ENCODE measurements at regions of chr2 and their contacts with region 1.

Region 1: GRCh38 chr2:33577668-33578067 is 21.4 kb downstream of the FAM98A start:
- DNase-seq: no peak
- H3K4me3 ChIP-seq: peak overlapping the region in 20 of 59 donors; percentile 1 to 49 (median 26)
- H3K27ac ChIP-seq: peak overlapping the region; percentile 13 to 98 (median 91)
- H3K27me3 ChIP-seq: no peaks in the 10 kb centered on the region
- CTCF ChIP-seq: no peak

Region 2: DNA sequence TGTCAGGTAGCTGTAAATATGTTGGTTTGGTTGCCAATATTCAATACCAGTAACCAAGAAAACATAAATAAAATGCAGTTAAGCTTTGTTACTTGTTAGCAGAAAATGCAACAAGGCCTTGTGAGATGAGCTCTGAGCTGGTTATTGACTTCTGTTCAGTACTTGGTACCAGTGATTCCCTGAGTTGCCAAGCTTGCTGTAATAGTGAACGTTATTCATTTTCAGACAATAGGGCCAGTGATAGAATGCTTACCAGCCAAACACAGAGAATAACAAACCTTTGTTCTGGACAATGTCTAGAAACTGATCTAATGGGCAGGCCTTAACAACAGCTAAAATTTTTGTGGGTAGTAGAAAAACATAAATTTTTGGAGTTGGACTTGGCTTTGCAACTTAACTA is 71.7 kb before region 1 on chr2:
- intact Hi-C with region 1: loop called in 1 of 2 experiments (anchors 1 kb)
- DNase-seq: no peak
- H3K4me3 ChIP-seq: peak overlapping the region in 2 of 59 donors; percentile 25 to 40
- H3K27ac ChIP-seq: peak overlapping the region; percentile 70 to 100 (median 97)
- H3K27me3 ChIP-seq: no peaks in the 10 kb centered on the region
- CTCF ChIP-seq: peak in 2 of 56 donors; percentile 19 to 20

Measured in dorsolateral prefrontal cortex (tissue), 120 donors.